ENCODE measurements at regions of chr15 and their contacts with region 1.

Region 1: DNA sequence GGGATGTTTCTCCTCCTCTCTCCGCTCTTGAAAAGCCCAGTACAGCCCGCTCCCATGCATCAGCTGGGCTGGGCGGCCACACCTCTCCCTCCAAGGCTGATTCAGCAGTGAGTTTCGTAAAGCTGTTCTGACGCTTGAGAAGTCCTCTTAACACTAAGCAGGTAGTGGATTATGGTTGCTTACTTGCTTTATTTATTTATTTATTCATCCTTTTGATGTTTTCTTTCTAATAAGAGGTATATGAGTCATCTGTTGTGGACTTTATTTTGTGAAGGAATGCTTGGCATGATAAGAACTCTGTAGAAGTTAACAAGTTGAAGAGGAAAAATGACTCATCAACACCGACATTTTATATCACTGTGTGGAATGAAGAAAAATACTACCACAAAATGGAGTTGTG is 285.0 kb downstream of the SQOR start:
- DNase-seq: no peak
- ATAC-seq: peak in 5 of 8 donors; percentile 8 to 72 (median 61)
- H3K4me3 ChIP-seq: no peak overlapping the region
- H3K27ac ChIP-seq: peak overlapping the region in 8 of 10 donors; percentile 5 to 78 (median 62)
- H3K4me1 ChIP-seq: peaks cover 0 to 35% (median 14%) of the 10 kb centered on the region in 9 donors
- H3K27me3 ChIP-seq: no peaks in the 10 kb centered on the region
- CTCF ChIP-seq: no peak

Region 2: GRCh38 chr15:45732662-45733061 is 187.1 kb before region 1 on chr15:
- intact Hi-C with region 1: no loop called
- DNase-seq: peak; percentile 28 to 49
- ATAC-seq: peak; percentile 79 to 94 (median 90)
- H3K4me3 ChIP-seq: peak overlapping the region in 1 of 10 donors; percentile 9
- H3K27ac ChIP-seq: peak overlapping the region in 7 of 10 donors; percentile 3 to 62 (median 50)
- H3K4me1 ChIP-seq: peaks cover 0 to 29% (median 21%) of the 10 kb centered on the region in 9 donors
- H3K27me3 ChIP-seq: no peaks in the 10 kb centered on the region
- CTCF ChIP-seq: no peak

Region 3: GRCh38 chr15:45842151-45842550 is 77.7 kb before region 1 on chr15:
- intact Hi-C with region 1: loop called in 1 of 10 experiments (anchors 10 kb)
- DNase-seq: no peak
- ATAC-seq: no peak
- H3K4me3 ChIP-seq: no peak overlapping the region
- H3K27ac ChIP-seq: no peak overlapping the region
- H3K4me1 ChIP-seq: no peaks in the 10 kb centered on the region
- H3K27me3 ChIP-seq: peaks cover 0 to 7% (median 0%) of the 10 kb centered on the region in 7 donors
- CTCF ChIP-seq: no peak

Region 4: GRCh38 chr15:45993508-45993907 is 73.7 kb after region 1 on chr15:
- intact Hi-C with region 1: loop called in 1 of 10 experiments (anchors 5 kb)
- DNase-seq: no peak
- ATAC-seq: peak in 6 of 8 donors; percentile 66 to 87 (median 77)
- H3K4me3 ChIP-seq: no peak overlapping the region
- H3K27ac ChIP-seq: peak overlapping the region in 1 of 10 donors; percentile 49
- H3K4me1 ChIP-seq: peaks cover 0 to 24% (median 5%) of the 10 kb centered on the region in 9 donors
- H3K27me3 ChIP-seq: no peaks in the 10 kb centered on the region
- CTCF ChIP-seq: no peak

Region 5: DNA sequence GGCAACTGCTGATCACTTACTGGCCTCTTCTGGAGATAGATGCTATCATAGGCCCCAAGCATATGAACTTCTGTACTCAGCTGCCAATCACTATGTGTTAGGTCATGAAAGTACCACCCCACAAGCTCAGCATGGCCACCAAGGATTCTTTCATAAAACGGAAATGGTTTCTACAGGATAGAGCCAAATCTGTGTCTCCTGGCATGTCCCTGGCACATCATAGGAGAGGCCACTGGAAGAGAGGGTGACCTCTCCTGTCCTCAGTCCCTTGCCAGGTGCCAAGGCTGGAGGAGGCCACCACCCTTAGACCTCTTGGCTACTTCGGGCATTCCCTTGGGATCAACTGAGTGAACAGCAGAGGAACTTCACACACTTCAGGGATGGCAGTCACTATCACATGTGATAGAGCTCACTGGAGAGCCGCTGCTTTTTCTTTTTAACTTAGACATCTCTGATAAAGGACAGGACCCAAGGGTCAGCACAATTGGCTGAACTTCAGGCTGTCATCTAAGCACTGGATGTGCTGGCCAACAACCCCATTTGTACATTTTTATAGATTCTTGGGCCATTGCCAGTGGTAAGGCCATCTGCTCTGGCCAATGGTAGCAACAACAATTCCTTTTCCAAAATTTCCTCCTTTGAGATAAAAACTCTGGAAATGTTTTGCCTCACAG is 140.3 kb after region 1 on chr15:
- intact Hi-C with region 1: no loop called
- DNase-seq: no peak
- ATAC-seq: peak in 5 of 8 donors; percentile 11 to 70 (median 34)
- H3K4me3 ChIP-seq: no peak overlapping the region
- H3K27ac ChIP-seq: no peak overlapping the region
- H3K4me1 ChIP-seq: peaks cover 0 to 16% (median 5%) of the 10 kb centered on the region in 9 donors
- H3K27me3 ChIP-seq: no peaks in the 10 kb centered on the region
- CTCF ChIP-seq: no peak

Region 6: DNA sequence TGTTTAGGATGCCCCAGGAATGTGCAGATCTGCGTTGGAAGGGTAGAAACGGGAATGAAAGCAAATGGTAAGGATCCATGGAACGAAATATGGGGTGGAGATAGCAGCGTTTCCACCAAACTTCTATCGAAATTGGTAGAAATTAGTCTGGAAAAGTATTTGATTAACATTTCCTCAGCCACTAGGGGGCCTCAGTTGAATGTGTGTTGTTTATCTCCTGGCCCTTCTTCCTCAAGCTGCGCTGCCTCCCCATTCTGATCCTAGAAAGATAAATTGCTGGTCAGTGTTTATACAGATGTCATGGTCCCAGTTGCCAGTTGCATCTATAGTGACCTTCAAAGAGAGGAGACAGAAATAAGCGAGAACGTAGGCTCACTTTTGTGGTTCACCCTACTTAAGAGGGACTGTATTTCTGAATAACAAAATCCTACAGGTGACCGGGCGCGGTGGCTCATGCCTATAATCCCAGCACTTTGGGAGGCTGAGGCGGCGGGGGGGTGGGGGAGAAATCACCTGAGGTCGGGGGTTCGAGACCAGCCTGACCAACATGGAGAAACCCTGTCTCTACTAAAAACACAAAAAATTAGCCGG is 172.1 kb after region 1 on chr15:
- intact Hi-C with region 1: loop called in 1 of 10 experiments (anchors 5 kb)
- DNase-seq: peak in 1 of 2 donors; percentile 16
- ATAC-seq: no peak
- H3K4me3 ChIP-seq: no peak overlapping the region
- H3K27ac ChIP-seq: no peak overlapping the region
- H3K4me1 ChIP-seq: peaks cover 0 to 25% (median 8%) of the 10 kb centered on the region in 9 donors
- H3K27me3 ChIP-seq: no peaks in the 10 kb centered on the region
- CTCF ChIP-seq: peak in 8 of 9 donors; percentile 12 to 62 (median 46)

Measured in heart right ventricle (tissue), 16 donors.